Dorsolateral prefrontal cortex (tissue), 120 donors: ENCODE measurements at regions of chr20 and their contacts with region 1.

Region 1: GRCh38 chr20:25273541-25274358 is 25.9 kb downstream of the PYGB start:
- DNase-seq: peak; percentile 31 to 82 (median 67)
- H3K4me3 ChIP-seq: peak overlapping the region in 16 of 59 donors; percentile 1 to 29 (median 12)
- H3K27ac ChIP-seq: peak overlapping the region in 58 of 59 donors; percentile 24 to 93 (median 83)
- H3K27me3 ChIP-seq: no peaks in the 10 kb centered on the region
- CTCF ChIP-seq: no peak

Region 2: GRCh38 chr20:25237610-25238318 is 36.0 kb before region 1 on chr20:
- intact Hi-C with region 1: loop called in 1 of 2 experiments (anchors 5 kb)
- DNase-seq: peak in 4 of 10 donors; percentile 37 to 72 (median 70)
- H3K4me3 ChIP-seq: no peak overlapping the region
- H3K27ac ChIP-seq: peak overlapping the region in 27 of 59 donors; percentile 8 to 83 (median 55)
- H3K27me3 ChIP-seq: no peaks in the 10 kb centered on the region
- CTCF ChIP-seq: no peak

Region 3: DNA sequence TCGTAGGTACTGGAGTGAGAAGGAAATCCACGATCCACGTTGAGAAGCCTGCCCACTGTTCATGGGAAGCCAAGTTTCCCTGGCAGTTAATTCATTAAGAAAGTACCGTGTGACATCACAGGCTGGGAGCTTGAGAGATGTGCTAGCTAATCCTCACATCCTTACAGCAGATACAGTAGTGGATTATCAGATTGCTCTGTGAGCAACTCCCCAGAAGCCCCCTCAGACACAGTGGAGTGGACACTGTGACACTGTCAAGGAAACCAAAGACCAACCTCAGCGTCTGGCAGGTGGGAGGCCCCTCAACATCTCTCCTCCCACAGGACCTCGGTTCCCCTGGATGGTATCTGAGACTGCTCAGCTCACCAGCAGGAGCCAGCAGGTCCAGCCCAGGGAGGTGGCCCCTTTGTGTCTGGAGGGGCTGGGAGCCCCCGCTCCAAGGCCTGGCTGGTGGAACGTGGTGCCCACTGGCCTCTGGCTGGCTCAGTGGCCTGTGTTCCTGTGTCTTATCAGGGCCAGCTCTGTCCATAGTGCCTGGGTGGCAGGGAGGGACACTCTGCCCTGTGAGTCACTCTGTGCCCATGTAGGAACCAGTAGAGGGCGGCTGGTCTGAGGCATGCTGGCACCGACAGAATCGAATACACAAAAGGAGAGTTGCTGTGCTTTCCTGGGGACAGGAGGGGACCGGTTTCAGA is 18.6 kb before region 1 on chr20:
- intact Hi-C with region 1: loop called in 1 of 2 experiments (anchors 2 kb)
- DNase-seq: peak in 6 of 10 donors; percentile 58 to 78 (median 68)
- H3K4me3 ChIP-seq: peak overlapping the region in 9 of 59 donors; percentile 0 to 31 (median 8)
- H3K27ac ChIP-seq: peak overlapping the region in 50 of 59 donors; percentile 5 to 94 (median 59)
- H3K27me3 ChIP-seq: no peaks in the 10 kb centered on the region
- CTCF ChIP-seq: peak in 35 of 56 donors; percentile 10 to 62 (median 29)

Region 4: DNA sequence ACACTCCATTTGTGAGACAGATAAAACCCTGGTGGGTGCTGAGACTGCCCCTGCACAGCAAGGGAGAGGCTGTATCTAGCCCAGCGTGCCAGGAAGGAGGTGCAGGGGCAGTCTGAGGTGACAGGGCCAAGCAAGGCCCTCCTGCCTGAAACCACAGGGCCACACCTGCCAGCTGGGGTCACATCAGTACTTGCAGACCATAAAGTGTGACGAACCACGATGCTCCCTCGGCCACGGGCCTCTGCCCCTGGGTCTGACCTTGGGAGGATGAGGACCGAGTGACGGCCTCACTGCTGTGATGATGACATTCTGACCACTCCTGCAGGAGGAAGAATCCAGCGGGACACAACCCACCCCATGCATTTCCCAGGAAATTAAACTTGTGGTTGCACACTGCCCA is 236.5 kb after region 1 on chr20:
- intact Hi-C with region 1: no loop called
- DNase-seq: no peak
- H3K4me3 ChIP-seq: no peak overlapping the region
- H3K27ac ChIP-seq: no peak overlapping the region
- H3K27me3 ChIP-seq: no peaks in the 10 kb centered on the region
- CTCF ChIP-seq: no peak